HEK293 (cell line): ENCODE measurements at regions of chr22 and their contacts with region 1.

Region 1: GRCh38 chr22:41746567-41747400 is 47.5 kb downstream of the MEI1 start:
- H3K4me3 ChIP-seq: no peak overlapping the region
- H3K27ac ChIP-seq: no peak overlapping the region
- H3K4me1 ChIP-seq: no peaks in the 10 kb centered on the region
- CTCF ChIP-seq: peak; percentile 55

Region 2: DNA sequence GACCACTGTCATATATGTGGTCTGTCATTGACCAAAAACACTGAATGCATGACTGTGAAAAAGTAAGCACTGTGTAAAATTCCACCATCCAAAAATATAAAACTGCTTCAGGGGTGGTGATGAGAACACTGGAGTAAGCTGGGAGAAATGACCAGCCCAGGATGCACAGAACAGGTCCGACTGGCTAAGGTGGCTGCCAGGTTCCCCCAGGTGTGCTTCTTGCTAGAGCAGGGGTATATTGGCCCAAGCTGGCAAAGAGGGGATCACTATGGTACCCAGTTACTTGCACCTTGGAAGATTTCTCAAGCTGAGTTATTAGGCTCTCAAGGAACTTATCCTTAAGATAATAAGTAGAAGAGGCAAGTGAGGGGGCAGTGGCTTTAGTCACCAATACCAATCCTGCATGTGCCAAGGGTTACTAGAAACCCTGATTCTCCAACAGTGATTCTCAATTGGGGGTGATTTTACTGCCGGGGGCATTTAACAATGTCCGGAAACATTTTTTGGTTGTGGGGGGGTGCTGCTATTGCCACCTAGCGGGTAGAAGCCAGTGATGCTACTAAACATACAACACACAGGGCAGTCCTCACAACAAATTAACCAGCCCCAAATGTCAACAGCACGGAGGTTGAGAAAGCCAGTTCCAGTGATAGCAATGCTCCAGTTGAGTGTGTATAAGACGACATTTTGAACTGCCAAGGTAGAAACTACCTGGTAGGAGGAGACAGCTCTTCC is 73.8 kb before region 1 on chr22:
- CTCF ChIA-PET with region 1: no interaction called
- POLR2A ChIA-PET with region 1: no interaction called
- H3K4me3 ChIP-seq: no peak overlapping the region
- H3K27ac ChIP-seq: peak overlapping the region; percentile 31; the same call in 1 of the 2 replicates
- H3K4me1 ChIP-seq: 0 out of 2 replicates have a peak, but pooled peaks cover 2% of the 10 kb centered on the region
- CTCF ChIP-seq: peak; percentile 61; the same call in 1 of the 2 replicates

Region 3: GRCh38 chr22:41725510-41726110 is 21.2 kb before region 1 on chr22:
- CTCF ChIA-PET with region 1: interaction called, 33 read pairs
- POLR2A ChIA-PET with region 1: interaction called, 4 read pairs
- H3K4me3 ChIP-seq: no peak overlapping the region
- H3K27ac ChIP-seq: no peak overlapping the region
- H3K4me1 ChIP-seq: no peaks in the 10 kb centered on the region
- CTCF ChIP-seq: no peak

Region 4: GRCh38 chr22:41757502-41757901 is 10.7 kb after region 1 on chr22:
- CTCF ChIA-PET with region 1: interaction called, 27 read pairs
- POLR2A ChIA-PET with region 1: interaction called, 4 read pairs
- H3K4me3 ChIP-seq: no peak overlapping the region
- H3K27ac ChIP-seq: no peak overlapping the region
- H3K4me1 ChIP-seq: no peaks in the 10 kb centered on the region
- CTCF ChIP-seq: no peak

Region 5: GRCh38 chr22:41768430-41768829 is 21.6 kb after region 1 on chr22:
- CTCF ChIA-PET with region 1: interaction called, 30 read pairs
- POLR2A ChIA-PET with region 1: interaction called, 5 read pairs
- H3K4me3 ChIP-seq: no peak overlapping the region
- H3K27ac ChIP-seq: no peak overlapping the region
- H3K4me1 ChIP-seq: no peaks in the 10 kb centered on the region
- CTCF ChIP-seq: no peak

Region 6: GRCh38 chr22:41800348-41801146 is 53.8 kb after region 1 on chr22 and contains the start of gene CCDC134:
- CTCF ChIA-PET with region 1: interaction called, 10 read pairs
- POLR2A ChIA-PET with region 1: interaction called, 12 read pairs
- H3K4me3 ChIP-seq: peak within 1 kb of the TSS; percentile 75
- H3K27ac ChIP-seq: peak within 1 kb of the TSS; percentile 82
- H3K4me1 ChIP-seq: no peaks in the 10 kb centered on the region; the same call in 1 of the 2 replicates
- CTCF ChIP-seq: peak; percentile 12; the same call in 1 of the 2 replicates

Region 7: DNA sequence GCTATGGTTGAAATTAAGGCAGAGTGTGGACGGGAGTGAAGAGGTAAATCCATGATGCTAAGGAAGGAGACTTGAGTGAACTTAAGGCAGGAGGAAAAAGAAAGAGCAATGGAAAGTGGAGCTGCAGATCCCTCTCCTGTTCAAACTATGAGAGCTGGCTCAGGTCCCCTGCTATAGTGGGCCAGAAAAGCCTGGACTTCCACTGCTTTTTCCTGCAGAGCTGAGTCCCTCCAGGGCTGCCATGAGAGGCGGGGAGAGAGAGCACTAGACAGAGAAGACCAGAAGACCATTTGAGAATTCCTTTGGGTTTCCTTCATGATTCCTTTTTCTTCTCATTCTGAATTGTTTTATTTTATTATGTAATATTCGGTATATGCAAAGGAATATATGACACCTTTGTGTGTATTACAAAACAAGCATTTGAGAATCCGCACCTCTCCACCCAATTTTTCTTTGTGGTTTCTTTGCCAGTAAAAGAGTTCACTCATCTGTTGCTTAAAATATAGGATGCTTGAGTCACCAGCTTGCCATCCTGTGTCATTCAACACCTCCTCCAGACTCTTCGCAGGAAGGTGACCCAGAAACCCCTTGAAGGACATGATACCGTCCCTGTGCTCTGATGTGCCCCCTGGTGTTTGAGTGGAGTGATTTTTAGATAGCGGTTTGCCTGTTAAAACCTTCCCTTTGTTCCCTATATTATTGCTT is 110.5 kb after region 1 on chr22:
- CTCF ChIA-PET with region 1: interaction called, 61 read pairs
- POLR2A ChIA-PET with region 1: interaction called, 3 read pairs
- H3K4me3 ChIP-seq: no peak overlapping the region
- H3K27ac ChIP-seq: no peak overlapping the region
- H3K4me1 ChIP-seq: peaks cover 10% of the 10 kb centered on the region
- CTCF ChIP-seq: no peak